ENCODE measurements at regions of chr2 and their contacts with region 1.

Region 1: DNA sequence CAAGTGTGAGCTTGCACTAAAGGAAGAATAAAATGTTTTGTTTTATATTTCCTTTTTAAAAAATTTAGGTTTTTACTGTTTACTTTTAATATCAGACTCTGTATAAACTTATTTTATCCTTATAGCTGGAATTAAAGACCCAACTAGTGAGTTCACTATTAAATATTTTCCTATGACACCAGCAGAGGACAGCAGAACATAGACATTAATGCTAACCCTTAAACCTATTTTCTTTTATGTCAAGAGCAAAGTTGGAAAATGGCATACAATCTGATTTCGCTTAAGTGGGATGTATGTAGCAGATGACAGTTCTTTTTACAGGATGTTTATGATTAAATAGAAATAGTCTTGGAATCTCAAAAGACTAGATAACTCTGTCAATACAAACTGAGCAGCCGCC is 188.2 kb upstream of the XIRP2 start:
- DNase-seq: peak in 1 of 9 experiments; percentile 9
- ATAC-seq: no peak
- H3K4me3 ChIP-seq: no peak overlapping the region
- H3K4me3 Mint-ChIP-seq: no peak overlapping the region
- H3K27ac ChIP-seq: no peak overlapping the region
- H3K27ac Mint-ChIP-seq: no peak overlapping the region
- H3K4me1 ChIP-seq: no peaks in the 10 kb centered on the region
- H3K4me1 Mint-ChIP-seq: no peaks in the 10 kb centered on the region
- H3K27me3 ChIP-seq: no peaks in the 10 kb centered on the region
- H3K27me3 Mint-ChIP-seq: peaks cover 3% of the 10 kb centered on the region
- CTCF ChIP-seq: peak; percentile 32

Region 2: GRCh38 chr2:167212014-167212648 is 512.1 kb after region 1 on chr2:
- CTCF ChIA-PET with region 1: no interaction called
- POLR2A ChIA-PET with region 1: no interaction called
- intact Hi-C with region 1: loop called in 1 of 2 experiments (anchors 5 kb)
- DNase-seq: peak in 2 of 9 experiments; percentile 4 to 28
- ATAC-seq: no peak
- H3K4me3 ChIP-seq: no peak overlapping the region
- H3K4me3 Mint-ChIP-seq: no peak overlapping the region
- H3K27ac ChIP-seq: no peak overlapping the region
- H3K27ac Mint-ChIP-seq: no peak overlapping the region
- H3K4me1 ChIP-seq: no peaks in the 10 kb centered on the region
- H3K4me1 Mint-ChIP-seq: no peaks in the 10 kb centered on the region
- H3K27me3 ChIP-seq: no peaks in the 10 kb centered on the region
- H3K27me3 Mint-ChIP-seq: no peaks in the 10 kb centered on the region
- CTCF ChIP-seq: no peak